Activated CD8-positive, alpha-beta T cell treated with anti-CD3 and anti-CD28 coated beads for 36 hours (primary cell): ENCODE measurements at regions of chr17 and their contacts with region 1.

Region 1: DNA sequence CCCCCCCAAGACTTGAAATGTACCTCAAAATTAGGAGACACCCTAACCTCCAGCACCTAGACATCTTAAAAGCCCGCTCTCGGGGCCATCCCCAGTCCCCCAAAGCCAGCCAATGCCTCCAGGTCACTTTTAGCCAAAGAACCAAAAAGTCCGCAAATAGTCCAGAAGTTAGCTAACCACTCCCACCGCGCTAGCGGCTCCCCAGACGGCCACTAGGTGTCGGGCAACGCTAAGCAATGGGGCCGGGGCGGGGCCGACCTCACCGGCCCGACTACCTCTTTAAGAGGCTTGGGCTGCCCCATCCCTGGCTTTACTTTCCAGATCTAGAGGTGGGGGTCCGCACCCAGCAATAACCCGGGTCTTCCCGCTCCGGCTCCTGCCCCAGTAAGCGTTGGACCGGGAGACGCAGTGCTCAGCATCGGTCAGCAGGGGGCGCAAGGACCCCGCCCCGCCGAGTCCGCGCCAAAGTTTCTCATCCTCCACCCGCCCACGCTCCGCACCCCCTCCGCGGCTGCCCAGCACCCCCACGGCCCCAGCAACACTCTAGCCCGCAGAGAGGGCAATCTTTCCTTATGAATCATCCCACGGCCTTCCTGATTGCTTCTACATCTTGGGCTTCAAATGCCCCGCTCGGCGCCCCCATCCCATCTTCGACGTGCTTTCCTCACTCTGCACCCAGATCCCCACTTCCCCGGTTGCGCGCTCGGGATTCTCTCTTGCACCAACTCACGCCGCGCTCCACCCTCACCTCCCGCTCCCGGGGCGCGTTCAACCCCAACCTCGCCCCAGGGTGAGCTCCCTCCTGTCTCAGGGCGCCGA is 765 bp downstream of the COL1A1 start:
- DNase-seq: peak; percentile 90
- ATAC-seq: peak; percentile 78
- H3K4me3 Mint-ChIP-seq: peak overlapping the region; percentile 67
- H3K27ac Mint-ChIP-seq: no peak overlapping the region
- H3K4me1 Mint-ChIP-seq: peaks cover 20% of the 10 kb centered on the region
- H3K27me3 Mint-ChIP-seq: peaks cover 47% of the 10 kb centered on the region
- CTCF ChIP-seq: peak; percentile 100

Region 2: DNA sequence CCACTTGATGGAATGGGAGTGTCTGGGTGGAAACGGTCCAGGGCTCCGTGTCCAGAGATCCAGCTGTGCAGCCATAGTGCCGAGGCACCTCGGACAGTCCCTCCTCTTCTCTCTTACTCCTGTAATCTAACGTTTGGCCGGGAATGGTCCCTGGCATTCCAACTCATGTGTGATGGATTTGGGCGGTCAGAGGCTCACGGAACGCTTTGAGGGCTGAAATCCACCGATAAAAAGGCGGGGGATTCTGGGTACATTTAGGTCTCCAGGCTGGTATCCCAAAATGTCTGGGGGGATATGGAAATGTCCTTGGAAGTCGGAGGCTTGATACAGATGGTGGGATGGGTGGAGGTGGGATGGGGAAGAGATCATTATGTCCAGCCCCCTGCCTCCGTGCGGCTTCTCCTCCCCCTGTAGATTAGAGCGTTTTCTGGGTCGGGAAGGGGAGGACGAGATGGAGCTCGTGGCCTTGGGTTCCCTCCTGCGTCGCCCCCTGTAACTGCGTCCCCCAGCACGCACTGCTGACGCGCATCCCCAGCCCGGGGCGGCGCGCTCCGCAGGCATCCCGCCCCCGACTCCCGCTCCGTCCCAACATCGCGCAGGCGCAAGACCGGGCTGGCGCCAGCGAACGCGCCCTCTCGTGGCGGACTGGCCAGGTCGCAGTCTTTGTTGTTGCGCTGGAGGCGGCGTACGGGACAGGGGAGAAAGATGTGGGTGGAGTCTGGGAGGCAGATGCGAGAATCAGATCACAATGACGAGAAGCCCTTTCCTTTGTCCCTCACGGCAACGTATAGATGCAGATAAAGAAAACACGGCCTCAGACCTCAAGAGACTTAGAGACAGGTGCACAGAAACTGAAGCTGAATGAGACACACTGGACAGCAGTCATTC is 39.4 kb before region 1 on chr17:
- CTCF ChIA-PET with region 1: interaction called, 15 read pairs
- POLR2A ChIA-PET with region 1: no interaction called
- intact Hi-C with region 1: no loop called
- DNase-seq: peak; percentile 96
- ATAC-seq: peak; percentile 92
- H3K4me3 Mint-ChIP-seq: peak overlapping the region; percentile 65
- H3K27ac Mint-ChIP-seq: peak overlapping the region; percentile 97
- H3K4me1 Mint-ChIP-seq: peaks cover 44% of the 10 kb centered on the region
- H3K27me3 Mint-ChIP-seq: no peaks in the 10 kb centered on the region
- CTCF ChIP-seq: peak; percentile 84

Region 3: GRCh38 chr17:50213026-50214022 is 12.7 kb after region 1 on chr17:
- CTCF ChIA-PET with region 1: interaction called, 111 read pairs
- POLR2A ChIA-PET with region 1: interaction called, 9 read pairs
- intact Hi-C with region 1: no loop called
- DNase-seq: peak; percentile 88
- ATAC-seq: peak; percentile 99
- H3K4me3 Mint-ChIP-seq: no peak overlapping the region
- H3K27ac Mint-ChIP-seq: no peak overlapping the region
- H3K4me1 Mint-ChIP-seq: peaks cover 22% of the 10 kb centered on the region
- H3K27me3 Mint-ChIP-seq: peaks cover 25% of the 10 kb centered on the region
- CTCF ChIP-seq: no peak

Region 4: GRCh38 chr17:50289991-50290702 is 89.5 kb after region 1 on chr17:
- CTCF ChIA-PET with region 1: interaction called, 157 read pairs
- POLR2A ChIA-PET with region 1: no interaction called
- intact Hi-C with region 1: no loop called
- DNase-seq: peak; percentile 33
- ATAC-seq: peak; percentile 93
- H3K4me3 Mint-ChIP-seq: no peak overlapping the region
- H3K27ac Mint-ChIP-seq: peak overlapping the region; percentile 41
- H3K4me1 Mint-ChIP-seq: peaks cover 9% of the 10 kb centered on the region
- H3K27me3 Mint-ChIP-seq: peaks cover 22% of the 10 kb centered on the region
- CTCF ChIP-seq: no peak

Region 5: GRCh38 chr17:50312308-50312707 is 111.6 kb after region 1 on chr17:
- CTCF ChIA-PET with region 1: interaction called, 36 read pairs
- POLR2A ChIA-PET with region 1: no interaction called
- intact Hi-C with region 1: no loop called
- DNase-seq: no peak
- ATAC-seq: no peak
- H3K4me3 Mint-ChIP-seq: no peak overlapping the region
- H3K27ac Mint-ChIP-seq: no peak overlapping the region
- H3K4me1 Mint-ChIP-seq: peaks cover 28% of the 10 kb centered on the region
- H3K27me3 Mint-ChIP-seq: peaks cover 15% of the 10 kb centered on the region
- CTCF ChIP-seq: no peak

Region 6: GRCh38 chr17:50372758-50373556 is 172.3 kb after region 1 on chr17 and contains the starts of genes EME1 and MRPL27:
- CTCF ChIA-PET with region 1: no interaction called
- POLR2A ChIA-PET with region 1: no interaction called
- intact Hi-C with region 1: no loop called
- DNase-seq: peak; percentile 91
- ATAC-seq: peak; percentile 95
- H3K4me3 Mint-ChIP-seq: peak within 1 kb of the TSS; percentile 94
- H3K27ac Mint-ChIP-seq: peak within 1 kb of the TSS; percentile 98
- H3K4me1 Mint-ChIP-seq: peaks cover 21% of the 10 kb centered on the region
- H3K27me3 Mint-ChIP-seq: no peaks in the 10 kb centered on the region
- CTCF ChIP-seq: no peak
- total RNA-seq, gene EME1: 48.0 to 48.6 TPM
- total RNA-seq, gene MRPL27: 54.6 to 55.8 TPM